ENCODE measurements at regions of chr2 and their contacts with region 1.

Region 1: GRCh38 chr2:181104512-181105115 is 124.2 kb downstream of the UBE2E3 start:
- DNase-seq: peak; percentile 67
- H3K4me3 ChIP-seq: no peak overlapping the region
- H3K27ac ChIP-seq: peak overlapping the region; percentile 38
- H3K27me3 ChIP-seq: no peaks in the 10 kb centered on the region
- CTCF ChIP-seq: peak; percentile 70

Region 2: DNA sequence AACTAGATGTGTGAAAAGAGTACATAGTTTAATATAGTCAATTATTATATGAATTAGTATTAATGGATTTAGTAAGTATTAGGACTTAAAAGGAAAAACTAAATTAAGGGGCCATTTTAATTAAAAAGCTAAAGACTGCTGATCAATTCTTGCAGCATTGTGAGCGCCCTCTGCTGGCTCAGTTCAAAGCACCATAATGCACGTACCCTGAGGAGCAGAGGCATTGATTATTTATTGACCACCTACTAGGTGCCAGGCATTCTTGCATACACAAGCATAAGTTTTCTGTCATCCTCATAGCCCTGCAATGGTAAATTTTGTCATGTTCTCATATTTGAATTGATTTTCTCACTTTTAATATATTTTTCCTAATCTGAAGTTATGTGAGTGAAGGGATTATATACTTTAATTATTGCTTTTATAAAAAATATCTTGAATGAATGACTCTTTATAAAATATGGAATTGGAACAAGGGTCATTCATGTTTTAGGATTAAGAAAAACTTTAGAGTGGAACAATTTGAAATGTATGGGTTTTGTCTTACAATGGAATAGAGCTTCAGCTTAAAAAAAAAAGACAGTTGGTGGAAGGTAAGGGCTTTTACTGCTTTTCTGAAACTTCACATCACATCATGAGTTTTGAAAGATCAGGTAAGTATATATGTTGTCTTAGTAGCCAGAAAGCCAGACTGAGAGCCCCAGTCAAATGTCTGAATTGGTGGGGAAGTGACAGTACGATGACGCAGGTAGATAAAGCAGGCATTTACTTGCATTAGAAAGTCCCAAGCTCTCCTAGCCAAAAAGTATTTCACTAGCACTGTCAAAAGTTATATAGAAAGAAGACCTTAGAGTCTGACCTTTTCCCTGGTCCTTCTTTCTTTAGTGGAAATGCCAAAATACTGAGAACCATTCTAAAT is 362.3 kb after region 1 on chr2:
- in situ Hi-C with region 1: loop called (anchors 10 kb)
- DNase-seq: peak; percentile 68
- H3K4me3 ChIP-seq: no peak overlapping the region
- H3K27ac ChIP-seq: peak overlapping the region; percentile 72
- H3K27me3 ChIP-seq: no peaks in the 10 kb centered on the region
- CTCF ChIP-seq: peak; percentile 92

Measured in brain microvascular endothelial cell (primary cell).